ENCODE measurements at regions of chr12 and their contacts with region 1.

Region 1: GRCh38 chr12:75641031-75641780 is 129.8 kb upstream of the KRR1 start:
- DNase-seq: peak in 1 of 9 donors; percentile 55
- ATAC-seq: peak; percentile 74
- H3K4me3 ChIP-seq: no peak overlapping the region
- H3K4me3 Mint-ChIP-seq: peak overlapping the region in 1 of 10 donors; percentile 20
- H3K27ac ChIP-seq: no peak overlapping the region
- H3K27ac Mint-ChIP-seq: peak overlapping the region in 1 of 9 donors; percentile 53
- H3K4me1 ChIP-seq: peaks cover 0 to 11% of the 10 kb centered on the region in 2 donors
- H3K4me1 Mint-ChIP-seq: peaks cover 0 to 20% (median 0%) of the 10 kb centered on the region in 7 donors
- H3K27me3 ChIP-seq: no peaks in the 10 kb centered on the region
- H3K27me3 Mint-ChIP-seq: peaks cover 1 to 10% (median 6%) of the 10 kb centered on the region in 5 donors

Region 2: GRCh38 chr12:75658901-75659383 is 17.7 kb after region 1 on chr12:
- CTCF ChIA-PET with region 1: no interaction called
- POLR2A ChIA-PET with region 1: no interaction called
- intact Hi-C with region 1: loop called in 1 of 2 experiments (anchors 2 kb)
- DNase-seq: no peak
- ATAC-seq: no peak
- H3K4me3 ChIP-seq: no peak overlapping the region
- H3K4me3 Mint-ChIP-seq: peak overlapping the region in 1 of 10 donors; percentile 16
- H3K27ac ChIP-seq: no peak overlapping the region
- H3K27ac Mint-ChIP-seq: peak overlapping the region in 1 of 9 donors; percentile 26
- H3K4me1 ChIP-seq: no peaks in the 10 kb centered on the region
- H3K4me1 Mint-ChIP-seq: peaks cover 0 to 34% (median 0%) of the 10 kb centered on the region in 7 donors
- H3K27me3 ChIP-seq: no peaks in the 10 kb centered on the region
- H3K27me3 Mint-ChIP-seq: peaks cover 0 to 6% (median 0%) of the 10 kb centered on the region in 5 donors

Region 3: GRCh38 chr12:75684678-75685601 is 43.7 kb after region 1 on chr12:
- CTCF ChIA-PET with region 1: no interaction called
- POLR2A ChIA-PET with region 1: no interaction called
- intact Hi-C with region 1: no loop called
- DNase-seq: no peak
- ATAC-seq: no peak
- H3K4me3 ChIP-seq: no peak overlapping the region
- H3K4me3 Mint-ChIP-seq: no peak overlapping the region
- H3K27ac ChIP-seq: no peak overlapping the region
- H3K27ac Mint-ChIP-seq: no peak overlapping the region
- H3K4me1 ChIP-seq: no peaks in the 10 kb centered on the region
- H3K4me1 Mint-ChIP-seq: no peaks in the 10 kb centered on the region
- H3K27me3 ChIP-seq: no peaks in the 10 kb centered on the region
- H3K27me3 Mint-ChIP-seq: peaks cover 0 to 7% (median 0%) of the 10 kb centered on the region in 5 donors

Measured in naive thymus-derived CD4-positive, alpha-beta T cell (primary cell).